ENCODE measurements at regions of chr1 and their contacts with region 1.

Region 1: GRCh38 chr1:230753586-230754251 is 6.5 kb downstream of the CAPN9 start:
- DNase-seq: peak; percentile 26
- H3K4me3 Mint-ChIP-seq: peak overlapping the region; percentile 68
- H3K27ac Mint-ChIP-seq: peak overlapping the region; percentile 76
- H3K4me1 Mint-ChIP-seq: peaks cover 8% of the 10 kb centered on the region
- H3K27me3 Mint-ChIP-seq: no peaks in the 10 kb centered on the region

Region 2: GRCh38 chr1:230517786-230518185 is 235.9 kb before region 1 on chr1:
- intact Hi-C with region 1: no loop called
- DNase-seq: no peak
- H3K4me3 Mint-ChIP-seq: no peak overlapping the region
- H3K27ac Mint-ChIP-seq: no peak overlapping the region
- H3K4me1 Mint-ChIP-seq: no peaks in the 10 kb centered on the region
- H3K27me3 Mint-ChIP-seq: peaks cover 13% of the 10 kb centered on the region

Region 3: DNA sequence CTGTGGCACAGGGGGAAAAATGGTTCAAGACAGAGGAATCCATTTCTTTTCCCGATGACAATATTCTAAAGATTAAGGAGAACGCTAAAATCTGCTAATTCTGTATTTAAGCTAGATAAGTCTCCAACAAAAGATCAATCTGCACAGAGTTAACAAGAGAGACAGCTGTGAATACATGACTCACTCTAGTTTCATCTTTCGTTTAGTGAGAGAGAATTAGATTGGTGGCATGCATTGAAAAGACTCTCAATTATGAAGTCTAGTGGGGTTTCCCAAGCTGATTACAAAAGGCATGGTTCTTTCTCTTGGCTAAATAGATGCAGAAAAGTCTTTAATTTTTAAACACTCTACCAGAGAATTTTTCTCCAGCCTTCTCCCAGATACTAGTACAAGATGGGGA is 27.9 kb after region 1 on chr1:
- intact Hi-C with region 1: loop called (anchors 1 kb)
- DNase-seq: no peak
- H3K4me3 Mint-ChIP-seq: no peak overlapping the region
- H3K27ac Mint-ChIP-seq: no peak overlapping the region
- H3K4me1 Mint-ChIP-seq: no peaks in the 10 kb centered on the region
- H3K27me3 Mint-ChIP-seq: peaks cover 5% of the 10 kb centered on the region

Region 4: GRCh38 chr1:230820568-230820967 is 66.8 kb after region 1 on chr1:
- intact Hi-C with region 1: no loop called
- DNase-seq: no peak
- H3K4me3 Mint-ChIP-seq: no peak overlapping the region
- H3K27ac Mint-ChIP-seq: no peak overlapping the region
- H3K4me1 Mint-ChIP-seq: no peaks in the 10 kb centered on the region
- H3K27me3 Mint-ChIP-seq: peaks cover 6% of the 10 kb centered on the region

Region 5: DNA sequence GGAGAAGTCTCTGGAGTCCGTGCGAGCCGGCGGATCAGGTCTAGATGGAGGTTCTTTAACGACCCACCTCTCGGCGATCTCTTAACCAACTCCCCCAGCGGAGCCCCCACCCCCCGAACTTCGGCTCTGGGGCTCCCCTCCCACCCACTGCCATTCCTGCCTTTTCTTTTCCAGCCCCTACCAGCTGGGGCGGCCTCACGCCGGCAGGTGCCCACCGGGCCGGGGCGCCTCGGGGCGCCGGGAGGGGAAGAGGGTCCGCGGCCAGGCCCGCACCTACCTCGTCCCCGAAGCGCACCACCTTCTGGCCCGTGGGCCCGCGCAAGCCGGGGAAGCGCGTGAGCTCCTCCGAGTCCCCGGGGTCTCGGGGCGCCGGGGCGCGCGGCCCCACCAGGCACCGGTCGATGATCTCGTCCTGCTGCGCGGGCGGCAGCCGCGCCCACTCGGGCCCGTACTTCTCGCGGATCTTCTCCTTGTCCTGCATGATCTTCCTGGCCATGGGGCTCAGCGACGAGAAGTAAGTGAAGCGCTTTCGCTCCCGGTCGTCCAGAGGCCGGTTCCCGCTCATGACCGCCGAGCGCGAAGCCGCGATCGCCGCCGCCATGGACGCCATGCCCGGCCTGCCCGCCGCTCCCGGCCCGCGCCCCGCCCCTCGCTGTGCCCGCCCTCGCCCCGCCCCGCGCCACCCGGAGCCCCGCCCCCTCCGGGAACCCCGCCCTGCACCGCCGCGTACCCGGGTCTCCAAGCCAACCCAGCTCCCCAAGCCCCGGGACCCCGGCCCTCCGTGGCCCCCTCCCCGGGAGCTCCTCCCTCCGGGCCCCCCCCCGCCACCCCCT is 114.4 kb after region 1 on chr1 and contains the start of gene C1orf198:
- intact Hi-C with region 1: loop called (anchors 5 kb)
- DNase-seq: peak; percentile 59
- H3K4me3 Mint-ChIP-seq: peak within 1 kb of the TSS; percentile 87
- H3K27ac Mint-ChIP-seq: peak within 1 kb of the TSS; percentile 80
- H3K4me1 Mint-ChIP-seq: peaks cover 28% of the 10 kb centered on the region
- H3K27me3 Mint-ChIP-seq: peaks cover 39% of the 10 kb centered on the region
- total RNA-seq, gene C1orf198: 14.1 and 14.6 TPM in 2 replicates